ENCODE measurements at regions of chr15 and their contacts with region 1.

Region 1: DNA sequence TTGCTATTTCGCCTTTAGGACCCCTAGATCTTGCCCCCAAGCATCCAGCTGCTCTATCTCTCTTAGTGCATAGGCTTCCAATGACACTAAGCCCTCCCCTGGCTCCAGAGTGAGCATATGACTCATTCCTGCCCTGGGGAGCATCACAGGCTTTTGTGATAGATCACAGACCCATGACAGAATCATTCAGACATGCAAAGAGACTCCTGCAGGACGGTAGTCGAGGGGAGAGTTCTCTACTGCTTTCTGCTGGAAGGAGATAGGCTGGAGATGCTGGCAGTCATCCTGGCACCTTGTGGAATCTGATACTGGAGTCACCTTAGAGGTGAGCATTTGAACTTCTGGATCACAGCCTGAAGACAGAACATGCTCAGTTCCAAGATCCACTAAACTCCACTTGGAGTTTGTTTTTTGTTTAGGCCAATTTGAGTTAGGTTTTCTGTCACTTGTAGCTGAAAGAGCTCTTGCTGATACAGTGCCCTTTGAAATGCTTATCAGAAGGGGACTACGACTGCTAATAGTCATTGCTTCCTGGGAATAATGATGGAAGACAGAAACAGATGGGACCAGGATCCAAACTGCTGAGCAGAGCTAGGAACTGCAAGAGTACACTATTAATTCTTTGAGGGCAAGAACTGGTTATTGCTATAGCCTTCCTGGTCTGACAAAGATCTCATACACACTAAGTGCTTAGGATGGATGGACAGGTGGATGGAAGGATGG is 10.9 kb downstream of the LYSMD2 start:
- DNase-seq: peak; percentile 74 to 88
- ATAC-seq: peak; percentile 97 to 98
- H3K4me3 ChIP-seq: no peak overlapping the region
- H3K27ac ChIP-seq: 0 out of 6 replicates have a peak overlapping the region, but pooled peaks of 1 of the 2 experiments have one; percentile 10
- H3K4me1 ChIP-seq: peaks cover 21% of the 10 kb centered on the region
- CTCF ChIP-seq: no peak
- EP300 ChIP-seq: no peak
- POLR2A ChIP-seq: no peak
- RAD21 ChIP-seq: peak in 1 of 2 experiments; percentile 10; a peak in 1 of 5 replicates

Region 2: GRCh38 chr15:51737280-51738017 is 10.9 kb after region 1 on chr15 and contains the start of gene LYSMD2:
- CTCF ChIA-PET with region 1: interaction called, 12 read pairs
- POLR2A ChIA-PET with region 1: interaction called, 5 read pairs
- DNase-seq: peak; percentile 54 to 59
- ATAC-seq: peak; percentile 85 to 86
- H3K4me3 ChIP-seq: peak within 1 kb of the TSS; percentile 68
- H3K27ac ChIP-seq: peak within 1 kb of the TSS; percentile 86 to 91
- H3K4me1 ChIP-seq: peaks cover 16% of the 10 kb centered on the region
- CTCF ChIP-seq: no peak
- EP300 ChIP-seq: no peak
- POLR2A ChIP-seq: peak; percentile 56
- RAD21 ChIP-seq: no peak
- polyA plus RNA-seq, gene LYSMD2: 29.2 and 32.1 TPM in 2 replicates